ENCODE measurements at regions of chr5 and their contacts with region 1.

Region 1: DNA sequence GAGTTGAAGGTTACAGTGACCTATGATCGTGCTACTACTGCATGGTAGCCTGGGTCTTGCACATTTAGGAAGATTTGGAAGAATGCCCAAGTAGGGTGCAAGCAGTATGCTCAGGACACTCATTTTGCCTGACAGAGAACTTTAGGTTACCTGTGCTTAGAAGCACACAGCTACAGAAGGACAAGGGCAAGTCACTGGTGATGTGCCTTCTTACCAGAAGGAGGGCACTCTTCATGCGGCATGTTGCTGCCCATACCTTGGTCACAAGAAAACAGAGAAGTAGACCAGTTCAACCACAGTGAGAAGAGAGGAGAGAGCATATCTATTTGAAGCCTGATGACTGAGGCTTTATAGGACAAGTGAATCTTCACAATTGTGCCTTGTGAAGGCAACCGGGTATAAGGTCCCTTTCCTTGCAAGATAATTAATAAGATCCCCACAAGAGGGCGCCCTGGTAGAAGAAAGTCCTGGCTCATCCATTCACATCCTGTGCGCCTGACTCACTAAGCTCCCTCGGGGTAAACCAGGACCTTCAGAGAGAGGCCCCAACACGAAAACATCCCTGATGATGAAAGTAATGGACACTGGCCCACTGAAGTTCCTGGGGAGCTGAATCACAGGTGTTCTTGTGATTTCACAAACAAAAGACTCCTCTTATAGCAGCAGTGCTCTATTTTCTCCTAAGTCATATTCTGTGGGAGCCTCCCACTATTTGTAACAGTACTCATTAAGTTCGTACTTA is 38.1 kb upstream of the STARD4 start:
- DNase-seq: peak; percentile 35 to 80 (median 72)
- ATAC-seq: peak; percentile 91
- H3K4me3 ChIP-seq: no peak overlapping the region
- H3K4me3 Mint-ChIP-seq: no peak overlapping the region
- H3K27ac ChIP-seq: no peak overlapping the region
- H3K27ac Mint-ChIP-seq: no peak overlapping the region
- H3K4me1 ChIP-seq: peaks cover 3% of the 10 kb centered on the region
- H3K4me1 Mint-ChIP-seq: peaks cover 13% of the 10 kb centered on the region
- H3K27me3 ChIP-seq: peaks cover 0 to 2% of the 10 kb centered on the region in 2 experiments
- H3K27me3 Mint-ChIP-seq: peaks cover 2% of the 10 kb centered on the region
- CTCF ChIP-seq: peak; percentile 69

Region 2: GRCh38 chr5:111242606-111243005 is 307.8 kb before region 1 on chr5:
- CTCF ChIA-PET with region 1: no interaction called
- POLR2A ChIA-PET with region 1: no interaction called
- intact Hi-C with region 1: no loop called
- DNase-seq: no peak
- ATAC-seq: no peak
- H3K4me3 ChIP-seq: no peak overlapping the region
- H3K4me3 Mint-ChIP-seq: peak overlapping the region; percentile 1
- H3K27ac ChIP-seq: no peak overlapping the region
- H3K27ac Mint-ChIP-seq: peak overlapping the region; percentile 80
- H3K4me1 ChIP-seq: peaks cover 81% of the 10 kb centered on the region
- H3K4me1 Mint-ChIP-seq: peaks cover 89% of the 10 kb centered on the region
- H3K27me3 ChIP-seq: no peaks in the 10 kb centered on the region
- H3K27me3 Mint-ChIP-seq: no peaks in the 10 kb centered on the region
- CTCF ChIP-seq: no peak

Region 3: DNA sequence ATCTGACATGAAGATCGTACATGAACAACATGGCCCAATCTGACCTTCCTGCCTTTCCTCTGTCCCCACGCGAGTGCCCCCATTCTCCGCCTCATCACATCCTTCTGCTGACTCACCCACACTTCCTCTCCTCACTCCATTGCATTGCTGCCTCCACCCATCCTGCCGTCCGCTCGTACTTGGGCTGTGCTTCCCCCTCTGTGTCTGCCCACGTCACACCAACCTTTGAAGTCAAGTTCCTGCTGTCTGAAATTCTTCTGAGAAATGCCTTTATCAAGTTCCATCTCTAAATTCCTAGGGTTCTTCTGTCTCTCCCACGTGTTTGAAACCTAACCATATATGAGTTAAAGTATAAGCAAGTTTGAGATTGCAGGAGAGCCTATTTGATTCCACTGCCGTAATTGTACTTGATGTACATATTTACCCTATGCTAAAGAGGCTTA is 20.1 kb before region 1 on chr5:
- CTCF ChIA-PET with region 1: interaction called, 12 read pairs
- POLR2A ChIA-PET with region 1: interaction called, 3 read pairs
- intact Hi-C with region 1: no loop called
- DNase-seq: peak; percentile 63 to 96 (median 83)
- ATAC-seq: peak; percentile 99
- H3K4me3 ChIP-seq: no peak overlapping the region
- H3K4me3 Mint-ChIP-seq: peak overlapping the region; percentile 21
- H3K27ac ChIP-seq: peak overlapping the region; percentile 26 to 81
- H3K27ac Mint-ChIP-seq: peak overlapping the region; percentile 83
- H3K4me1 ChIP-seq: peaks cover 7% of the 10 kb centered on the region
- H3K4me1 Mint-ChIP-seq: peaks cover 12% of the 10 kb centered on the region
- H3K27me3 ChIP-seq: no peaks in the 10 kb centered on the region
- H3K27me3 Mint-ChIP-seq: no peaks in the 10 kb centered on the region
- CTCF ChIP-seq: no peak

Region 4: DNA sequence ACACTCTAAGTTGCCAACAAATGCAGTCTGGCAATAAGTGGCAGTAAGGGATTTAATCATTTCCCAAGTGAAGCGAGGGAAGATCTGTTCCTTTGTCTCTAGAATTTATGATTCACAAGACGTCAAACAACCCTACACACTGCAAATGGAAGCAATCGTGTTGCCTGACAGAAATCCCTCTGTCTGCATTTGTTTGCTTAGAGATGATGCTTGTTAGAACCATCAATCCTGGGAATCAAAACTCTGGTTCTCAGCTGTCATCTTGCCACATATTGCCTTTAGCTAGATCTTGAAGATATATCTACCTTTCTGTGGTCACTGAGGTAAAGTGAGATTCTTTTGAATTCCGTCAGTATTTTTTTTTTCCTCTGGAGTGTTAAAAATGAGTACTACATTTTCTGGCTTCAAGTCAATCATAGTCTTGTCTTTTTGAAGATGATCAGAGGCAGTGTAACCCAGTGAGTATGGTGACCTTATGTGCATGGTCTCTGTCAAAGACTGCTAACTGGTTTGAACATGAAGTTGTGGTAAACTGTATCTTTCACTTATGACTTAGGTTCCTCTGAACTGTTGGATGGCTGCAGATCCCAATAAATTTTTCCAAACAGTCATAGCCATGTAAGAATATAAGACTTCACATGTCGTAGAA is 68.3 kb after region 1 on chr5:
- CTCF ChIA-PET with region 1: no interaction called
- POLR2A ChIA-PET with region 1: no interaction called
- intact Hi-C with region 1: no loop called
- DNase-seq: no peak
- ATAC-seq: no peak
- H3K4me3 ChIP-seq: no peak overlapping the region
- H3K4me3 Mint-ChIP-seq: no peak overlapping the region
- H3K27ac ChIP-seq: no peak overlapping the region
- H3K27ac Mint-ChIP-seq: no peak overlapping the region
- H3K4me1 ChIP-seq: no peaks in the 10 kb centered on the region
- H3K4me1 Mint-ChIP-seq: no peaks in the 10 kb centered on the region
- H3K27me3 ChIP-seq: no peaks in the 10 kb centered on the region
- H3K27me3 Mint-ChIP-seq: peaks cover 3% of the 10 kb centered on the region
- CTCF ChIP-seq: no peak

Region 5: DNA sequence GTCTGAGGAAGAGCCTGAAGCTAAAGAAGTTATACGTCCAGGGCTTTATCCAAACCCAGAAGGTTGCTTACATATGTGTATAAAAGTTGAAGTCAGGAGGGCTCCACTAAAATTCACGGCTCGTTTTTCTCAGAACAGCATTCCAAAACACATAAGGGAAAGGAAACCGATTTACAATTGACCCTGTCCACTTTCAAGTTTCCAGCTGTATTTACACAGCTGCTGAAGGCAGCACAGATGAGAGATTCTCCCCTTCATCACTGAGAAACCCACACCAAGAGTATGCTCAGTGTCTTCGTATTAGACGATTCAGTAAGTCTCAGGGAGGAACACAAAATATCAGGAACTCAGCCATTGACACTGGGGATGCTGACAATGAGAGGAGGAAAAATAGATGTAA is 212.4 kb after region 1 on chr5:
- CTCF ChIA-PET with region 1: no interaction called
- POLR2A ChIA-PET with region 1: no interaction called
- intact Hi-C with region 1: loop called in 1 of 2 experiments (anchors 5 kb)
- DNase-seq: no peak
- ATAC-seq: no peak
- H3K4me3 ChIP-seq: no peak overlapping the region
- H3K4me3 Mint-ChIP-seq: no peak overlapping the region
- H3K27ac ChIP-seq: no peak overlapping the region
- H3K27ac Mint-ChIP-seq: no peak overlapping the region
- H3K4me1 ChIP-seq: no peaks in the 10 kb centered on the region
- H3K4me1 Mint-ChIP-seq: peaks cover 6% of the 10 kb centered on the region
- H3K27me3 ChIP-seq: no peaks in the 10 kb centered on the region
- H3K27me3 Mint-ChIP-seq: no peaks in the 10 kb centered on the region
- CTCF ChIP-seq: no peak

Region 6: DNA sequence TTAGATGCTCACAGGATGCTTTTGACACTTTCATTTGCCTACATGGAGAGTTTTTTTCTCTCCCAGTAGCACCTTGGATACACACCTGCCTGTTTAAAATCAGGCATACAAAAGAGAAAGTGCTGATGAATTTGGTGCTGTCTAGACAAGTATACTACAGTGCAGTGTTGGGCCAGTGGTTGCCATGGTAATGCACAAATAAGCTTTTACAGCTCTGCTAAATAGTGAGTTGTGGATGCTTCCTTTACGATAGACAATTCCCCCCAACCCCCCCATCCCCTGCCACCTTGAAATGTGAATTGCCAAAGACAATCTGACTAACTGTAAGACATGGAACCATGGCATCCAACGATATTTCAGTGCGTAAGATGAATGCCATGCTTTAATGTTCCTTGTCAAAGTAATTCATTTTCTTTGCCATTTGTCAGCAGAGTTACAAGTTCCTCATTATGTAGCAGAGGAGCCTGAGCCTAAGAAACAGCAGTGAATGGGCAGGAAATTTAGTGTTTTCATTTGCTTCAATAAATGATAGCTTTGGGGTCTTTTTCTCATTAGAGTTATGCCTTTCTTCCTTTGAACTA is 298.0 kb after region 1 on chr5:
- CTCF ChIA-PET with region 1: no interaction called
- POLR2A ChIA-PET with region 1: no interaction called
- intact Hi-C with region 1: loop called (anchors 5 to 10 kb)
- DNase-seq: peak in 1 of 9 experiments; percentile 2
- ATAC-seq: no peak
- H3K4me3 ChIP-seq: no peak overlapping the region
- H3K4me3 Mint-ChIP-seq: no peak overlapping the region
- H3K27ac ChIP-seq: no peak overlapping the region
- H3K27ac Mint-ChIP-seq: no peak overlapping the region
- H3K4me1 ChIP-seq: no peaks in the 10 kb centered on the region
- H3K4me1 Mint-ChIP-seq: no peaks in the 10 kb centered on the region
- H3K27me3 ChIP-seq: no peaks in the 10 kb centered on the region
- H3K27me3 Mint-ChIP-seq: no peaks in the 10 kb centered on the region
- CTCF ChIP-seq: no peak

Region 7: DNA sequence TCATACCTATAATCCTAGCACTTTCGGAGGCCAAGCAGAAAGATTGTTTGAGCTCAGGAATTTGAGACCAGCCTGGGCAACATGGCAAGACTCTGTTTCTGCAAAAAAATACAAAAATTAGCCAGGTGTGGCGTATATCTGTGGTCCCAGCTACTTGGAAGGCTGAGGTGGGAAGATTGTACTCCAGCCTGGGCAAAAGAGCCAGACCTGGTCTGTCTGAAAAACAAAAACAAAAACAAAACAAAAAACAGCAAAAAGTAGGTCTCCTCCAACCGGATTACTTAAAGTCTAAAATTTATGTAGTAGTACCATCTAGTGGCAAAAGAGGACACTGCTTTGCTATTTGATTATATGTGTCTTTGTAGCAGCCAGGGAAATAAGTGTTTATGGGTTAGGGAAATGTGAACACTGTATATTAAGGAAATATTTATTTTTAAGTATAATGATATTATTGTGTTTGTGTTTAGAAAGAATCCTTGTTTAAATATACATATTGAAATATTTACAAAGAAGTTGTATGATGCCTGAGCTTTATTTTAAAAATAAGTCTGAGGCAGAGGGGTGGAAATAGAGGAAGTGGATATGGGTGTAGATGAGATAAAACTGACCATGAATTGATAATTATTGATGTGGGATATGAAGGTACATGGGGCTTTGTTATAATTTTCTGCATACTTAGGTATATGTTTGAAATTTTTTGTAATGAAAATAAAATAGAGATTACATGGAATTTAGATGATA is 1207.2 kb after region 1 on chr5:
- CTCF ChIA-PET with region 1: no interaction called
- POLR2A ChIA-PET with region 1: no interaction called
- intact Hi-C with region 1: loop called in 1 of 2 experiments (anchors 5 kb)
- DNase-seq: peak in 3 of 9 experiments; percentile 51 to 76 (median 69)
- ATAC-seq: peak; percentile 84
- H3K4me3 ChIP-seq: no peak overlapping the region
- H3K4me3 Mint-ChIP-seq: no peak overlapping the region
- H3K27ac ChIP-seq: no peak overlapping the region
- H3K27ac Mint-ChIP-seq: peak overlapping the region; percentile 34
- H3K4me1 ChIP-seq: no peaks in the 10 kb centered on the region
- H3K4me1 Mint-ChIP-seq: peaks cover 12% of the 10 kb centered on the region
- H3K27me3 ChIP-seq: no peaks in the 10 kb centered on the region
- H3K27me3 Mint-ChIP-seq: no peaks in the 10 kb centered on the region
- CTCF ChIP-seq: peak; percentile 83

Measured in CD8-positive, alpha-beta T cell (primary cell).